Posterior vena cava (tissue), 2 donors: ENCODE measurements at regions of chr9 and their contacts with region 1.

Region 1: DNA sequence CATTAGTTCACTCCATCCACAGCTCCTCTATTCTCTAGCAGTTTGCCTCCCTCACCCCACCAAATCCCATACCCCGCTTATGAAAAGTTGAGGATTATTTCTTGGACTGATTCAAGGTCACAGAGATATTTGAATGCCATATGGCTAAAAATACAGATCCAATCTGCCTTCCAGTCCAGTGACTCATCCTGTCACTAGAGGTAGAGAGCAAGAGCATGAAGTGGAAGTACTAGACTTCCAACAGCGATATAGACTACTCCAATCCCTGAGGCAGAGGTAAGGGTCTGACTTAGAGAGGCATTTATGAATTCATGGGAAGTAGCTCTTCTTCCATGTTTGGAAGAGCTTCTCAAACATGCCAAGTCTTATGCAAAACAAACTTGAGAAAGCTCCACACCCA is 72.4 kb upstream of the CCL21 start:
- DNase-seq: no peak

Region 2: GRCh38 chr9:34665381-34666250 is 116.8 kb before region 1 on chr9:
- intact Hi-C with region 1: no loop called
- DNase-seq: peak; percentile 98

Region 3: GRCh38 chr9:34809504-34810186 is 27.3 kb after region 1 on chr9:
- intact Hi-C with region 1: loop called in 1 of 2 experiments (anchors 1 kb)
- DNase-seq: no peak

Region 4: GRCh38 chr9:34899535-34900158 is 117.3 kb after region 1 on chr9:
- intact Hi-C with region 1: no loop called
- DNase-seq: peak; percentile 92